Left ventricle myocardium inferior (tissue), 1 donor: ENCODE measurements at regions of chr18 and their contacts with region 1.

Region 1: DNA sequence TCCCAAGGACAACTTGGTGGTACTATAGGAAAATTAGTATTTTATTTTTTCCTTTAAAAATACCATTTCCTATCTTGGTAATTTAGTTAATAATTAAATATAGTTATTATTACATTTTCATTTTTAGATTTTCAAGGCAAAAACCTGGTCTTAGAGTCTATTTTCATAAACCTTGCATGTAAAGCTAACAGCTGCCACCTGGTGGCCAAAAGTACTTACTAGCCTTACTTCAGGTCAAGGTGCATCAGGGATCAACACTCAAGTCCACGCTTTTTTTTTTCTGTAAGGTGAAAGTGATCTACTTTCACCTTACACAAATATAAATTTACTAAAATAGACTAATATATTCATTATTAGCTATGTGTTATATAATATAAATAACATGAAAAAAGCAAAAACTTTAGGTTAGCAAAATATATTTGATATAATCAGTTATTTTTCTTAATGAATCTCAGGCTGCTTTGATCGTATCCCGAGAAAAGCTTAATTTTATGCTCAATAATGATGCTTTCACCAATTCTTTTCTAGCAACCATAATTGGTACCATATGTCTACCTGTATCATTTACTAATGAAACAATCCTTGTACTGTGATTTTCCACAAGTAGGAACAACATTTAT is 62.5 kb downstream of the RELCH start:
- DNase-seq: peak; percentile 29
- H3K4me3 ChIP-seq: no peak overlapping the region
- H3K27ac ChIP-seq: no peak overlapping the region
- H3K4me1 ChIP-seq: no peaks in the 10 kb centered on the region
- H3K27me3 ChIP-seq: no peaks in the 10 kb centered on the region
- CTCF ChIP-seq: peak; percentile 83

Region 2: GRCh38 chr18:62183578-62184195 is 65.9 kb before region 1 on chr18:
- intact Hi-C with region 1: loop called (anchors 2 kb)
- DNase-seq: no peak
- H3K4me3 ChIP-seq: no peak overlapping the region
- H3K27ac ChIP-seq: no peak overlapping the region
- H3K4me1 ChIP-seq: peaks cover 40% of the 10 kb centered on the region
- H3K27me3 ChIP-seq: no peaks in the 10 kb centered on the region
- CTCF ChIP-seq: peak; percentile 99

Region 3: GRCh38 chr18:62566199-62566598 is 316.6 kb after region 1 on chr18:
- intact Hi-C with region 1: no loop called
- DNase-seq: no peak
- H3K4me3 ChIP-seq: no peak overlapping the region
- H3K27ac ChIP-seq: no peak overlapping the region
- H3K4me1 ChIP-seq: no peaks in the 10 kb centered on the region
- H3K27me3 ChIP-seq: no peaks in the 10 kb centered on the region
- CTCF ChIP-seq: peak; percentile 56